Testis (tissue), 5 donors: ENCODE measurements at regions of chr16 and their contacts with region 1.

Region 1: GRCh38 chr16:57300387-57301125 is 16.1 kb upstream of the PLLP start:
- DNase-seq: peak; percentile 100
- H3K4me3 ChIP-seq: peak overlapping the region; percentile 51 to 58
- H3K27ac ChIP-seq: peak overlapping the region; percentile 80 to 93
- H3K4me1 ChIP-seq: peaks cover 29% of the 10 kb centered on the region
- H3K27me3 ChIP-seq: no peaks in the 10 kb centered on the region
- CTCF ChIP-seq: peak; percentile 82 to 99 (median 97)
- POLR2A ChIP-seq: no peak

Region 2: GRCh38 chr16:56950881-56951771 is 349.4 kb before region 1 on chr16:
- intact Hi-C with region 1: no loop called
- DNase-seq: peak; percentile 44
- H3K4me3 ChIP-seq: no peak overlapping the region
- H3K27ac ChIP-seq: no peak overlapping the region
- H3K4me1 ChIP-seq: no peaks in the 10 kb centered on the region
- H3K27me3 ChIP-seq: no peaks in the 10 kb centered on the region
- CTCF ChIP-seq: peak in 1 of 3 experiments; percentile 32
- POLR2A ChIP-seq: no peak

Region 3: GRCh38 chr16:57091975-57092785 is 208.4 kb before region 1 on chr16 and contains the start of gene CPNE2:
- intact Hi-C with region 1: loop called (anchors 10 kb)
- DNase-seq: peak; percentile 48
- H3K4me3 ChIP-seq: peak within 1 kb of the TSS; percentile 66 to 75
- H3K27ac ChIP-seq: peak within 1 kb of the TSS; percentile 64 to 74
- H3K4me1 ChIP-seq: peaks cover 9% of the 10 kb centered on the region
- H3K27me3 ChIP-seq: no peaks in the 10 kb centered on the region
- CTCF ChIP-seq: no peak
- POLR2A ChIP-seq: no peak
- total RNA-seq, gene CPNE2: 18.3 to 25.2 TPM

Region 4: DNA sequence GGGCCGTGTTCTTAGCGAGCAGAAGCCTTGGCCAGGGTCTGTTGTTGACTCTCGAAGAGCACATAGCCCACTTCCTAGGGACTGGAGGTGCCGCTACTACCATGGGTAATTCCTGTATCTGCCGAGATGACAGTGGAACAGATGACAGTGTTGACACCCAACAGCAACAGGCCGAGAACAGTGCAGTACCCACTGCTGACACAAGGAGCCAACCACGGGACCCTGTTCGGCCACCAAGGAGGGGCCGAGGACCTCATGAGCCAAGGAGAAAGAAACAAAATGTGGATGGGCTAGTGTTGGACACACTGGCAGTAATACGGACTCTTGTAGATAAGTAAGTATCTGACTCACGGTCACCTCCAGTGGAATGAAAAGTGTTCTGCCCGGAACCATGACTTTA is 95.9 kb before region 1 on chr16:
- intact Hi-C with region 1: no loop called
- DNase-seq: no peak
- H3K4me3 ChIP-seq: no peak overlapping the region
- H3K27ac ChIP-seq: peak overlapping the region in 1 of 2 donors; percentile 42
- H3K4me1 ChIP-seq: no peaks in the 10 kb centered on the region
- H3K27me3 ChIP-seq: no peaks in the 10 kb centered on the region
- CTCF ChIP-seq: peak in 1 of 3 experiments; percentile 18
- POLR2A ChIP-seq: no peak

Region 5: DNA sequence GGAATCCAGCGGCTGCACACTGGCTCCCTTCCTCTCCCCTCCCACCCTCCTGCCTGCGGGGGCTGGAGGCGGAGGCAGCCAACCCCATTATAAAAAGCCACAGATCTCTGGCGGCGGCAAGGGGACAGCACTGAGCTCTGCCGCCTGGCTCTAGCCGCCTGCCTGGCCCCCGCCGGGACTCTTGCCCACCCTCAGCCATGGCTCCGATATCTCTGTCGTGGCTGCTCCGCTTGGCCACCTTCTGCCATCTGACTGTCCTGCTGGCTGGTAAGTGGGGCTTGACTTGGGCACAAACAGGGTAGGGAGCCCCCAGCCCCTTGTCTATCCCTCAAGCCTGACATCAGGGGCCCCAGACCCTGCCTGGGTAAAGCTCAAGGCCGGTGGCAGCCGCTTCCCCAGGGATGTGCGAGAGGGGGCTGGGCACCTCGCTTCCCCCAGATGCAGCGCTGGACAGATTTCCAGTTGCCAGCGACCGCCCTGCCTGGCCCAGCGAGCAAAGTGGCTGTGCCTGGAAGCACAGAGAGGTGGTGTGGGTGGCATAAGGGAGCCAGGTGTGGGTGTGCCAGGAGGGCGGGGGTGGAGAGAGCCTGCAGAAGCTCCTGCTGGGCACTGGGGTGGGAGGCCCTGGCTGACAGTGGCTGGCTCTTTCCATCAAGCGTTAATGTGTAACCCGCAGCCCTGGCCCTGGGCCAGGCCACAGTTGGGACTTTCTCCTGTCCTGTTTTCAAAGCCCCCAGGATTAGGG is 72.0 kb after region 1 on chr16 and contains the start of gene CX3CL1:
- intact Hi-C with region 1: loop called (anchors 10 kb)
- DNase-seq: peak; percentile 73
- H3K4me3 ChIP-seq: peak within 1 kb of the TSS; percentile 59 to 72
- H3K27ac ChIP-seq: peak within 1 kb of the TSS; percentile 88 to 91
- H3K4me1 ChIP-seq: peaks cover 18% of the 10 kb centered on the region
- H3K27me3 ChIP-seq: no peaks in the 10 kb centered on the region
- CTCF ChIP-seq: no peak
- POLR2A ChIP-seq: no peak
- total RNA-seq, gene CX3CL1: 8.5 to 19.6 TPM

Region 6: DNA sequence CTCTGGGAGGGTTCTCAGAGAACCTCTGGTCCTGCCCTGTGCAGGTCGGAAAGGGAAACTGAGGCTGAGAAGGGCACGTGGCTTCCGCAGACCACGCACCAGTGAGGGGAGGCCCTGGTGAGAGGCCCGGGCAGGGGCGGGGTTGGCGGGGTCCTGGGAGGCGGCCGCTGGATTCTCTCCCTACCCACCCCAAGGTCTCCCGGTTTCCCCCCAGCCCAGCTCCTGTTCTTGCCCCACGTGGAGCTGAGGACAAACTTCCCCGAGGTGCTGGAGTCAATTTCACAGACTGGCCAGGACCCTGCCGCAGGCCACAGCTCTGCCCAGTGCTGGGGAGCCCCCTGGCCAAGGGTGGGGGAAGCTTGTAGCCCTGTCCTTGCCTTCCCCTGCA is 115.6 kb after region 1 on chr16:
- intact Hi-C with region 1: loop called (anchors 2 kb)
- DNase-seq: no peak
- H3K4me3 ChIP-seq: peak overlapping the region in 1 of 2 donors; percentile 30
- H3K27ac ChIP-seq: peak overlapping the region; percentile 16 to 48
- H3K4me1 ChIP-seq: peaks cover 23% of the 10 kb centered on the region
- H3K27me3 ChIP-seq: no peaks in the 10 kb centered on the region
- CTCF ChIP-seq: no peak
- POLR2A ChIP-seq: no peak

Region 7: GRCh38 chr16:57519796-57520360 is 219.3 kb after region 1 on chr16:
- intact Hi-C with region 1: loop called (anchors 10 kb)
- DNase-seq: peak; percentile 87
- H3K4me3 ChIP-seq: no peak overlapping the region
- H3K27ac ChIP-seq: no peak overlapping the region
- H3K4me1 ChIP-seq: no peaks in the 10 kb centered on the region
- H3K27me3 ChIP-seq: no peaks in the 10 kb centered on the region
- CTCF ChIP-seq: peak; percentile 84 to 93 (median 84)
- POLR2A ChIP-seq: no peak

Region 8: DNA sequence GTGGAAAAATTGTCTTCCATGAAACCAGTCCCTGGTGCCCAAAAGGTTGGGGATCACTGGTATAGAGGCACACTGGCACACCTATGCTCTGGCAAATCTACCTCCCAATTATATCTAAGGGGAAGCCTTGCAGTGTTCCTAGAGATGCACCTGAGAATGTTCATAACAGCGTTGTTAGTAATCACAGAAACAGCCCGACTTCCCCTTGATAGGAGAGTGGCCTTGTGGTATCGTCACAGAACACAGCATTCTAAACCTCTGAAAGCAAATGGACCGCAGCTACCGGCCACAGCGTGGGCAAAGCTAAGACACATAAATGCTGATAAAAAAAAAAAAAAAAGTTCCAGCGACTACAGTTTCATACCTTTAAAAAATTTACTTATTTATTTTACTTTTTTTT is 288.8 kb after region 1 on chr16:
- intact Hi-C with region 1: no loop called
- DNase-seq: no peak
- H3K4me3 ChIP-seq: no peak overlapping the region
- H3K27ac ChIP-seq: no peak overlapping the region
- H3K4me1 ChIP-seq: no peaks in the 10 kb centered on the region
- H3K27me3 ChIP-seq: no peaks in the 10 kb centered on the region
- CTCF ChIP-seq: no peak
- POLR2A ChIP-seq: no peak